ENCODE measurements at regions of chr10 and their contacts with region 1.

Region 1: DNA sequence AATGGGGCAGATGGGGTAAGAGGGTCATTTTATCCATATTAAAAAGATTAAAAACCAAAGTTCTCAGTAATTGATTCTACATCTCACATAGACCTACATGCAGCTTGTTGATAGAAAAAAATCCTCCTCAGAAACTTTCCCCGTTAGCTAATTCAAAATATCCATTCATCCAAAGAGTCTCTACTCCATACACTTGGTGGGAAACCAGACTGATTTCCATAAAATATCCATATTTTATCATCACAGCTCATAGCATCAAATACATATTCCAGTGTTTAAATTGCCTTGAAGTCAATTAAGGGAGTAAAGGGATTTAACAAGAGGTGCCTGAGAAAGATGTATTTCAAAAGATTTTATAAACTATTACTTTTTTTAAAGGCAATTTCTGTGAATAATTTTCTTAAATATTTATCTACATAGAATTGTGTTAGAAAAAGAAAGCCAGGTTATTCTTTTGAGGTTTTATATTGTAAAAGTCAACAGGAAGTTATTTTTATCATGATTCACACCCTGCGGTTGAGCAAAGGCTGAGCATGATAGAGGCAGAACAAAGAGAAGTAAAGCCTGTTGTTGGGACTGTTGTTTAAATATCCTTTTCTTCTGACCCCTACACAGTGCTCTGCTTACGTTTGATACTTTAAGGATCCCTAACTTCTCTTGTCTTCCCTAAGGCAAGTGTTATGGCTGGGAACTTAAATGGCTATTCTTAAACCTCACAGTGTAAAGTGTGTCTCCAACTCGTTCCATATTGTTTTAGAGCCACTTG is 266.7 kb downstream of the PRKG1 start:
- DNase-seq: no peak
- ATAC-seq: no peak
- H3K4me3 ChIP-seq: no peak overlapping the region
- H3K27ac ChIP-seq: peak overlapping the region in 1 of 10 donors; percentile 13
- H3K4me1 ChIP-seq: peaks cover 0 to 26% (median 0%) of the 10 kb centered on the region in 9 donors
- H3K27me3 ChIP-seq: no peaks in the 10 kb centered on the region
- CTCF ChIP-seq: no peak

Region 2: DNA sequence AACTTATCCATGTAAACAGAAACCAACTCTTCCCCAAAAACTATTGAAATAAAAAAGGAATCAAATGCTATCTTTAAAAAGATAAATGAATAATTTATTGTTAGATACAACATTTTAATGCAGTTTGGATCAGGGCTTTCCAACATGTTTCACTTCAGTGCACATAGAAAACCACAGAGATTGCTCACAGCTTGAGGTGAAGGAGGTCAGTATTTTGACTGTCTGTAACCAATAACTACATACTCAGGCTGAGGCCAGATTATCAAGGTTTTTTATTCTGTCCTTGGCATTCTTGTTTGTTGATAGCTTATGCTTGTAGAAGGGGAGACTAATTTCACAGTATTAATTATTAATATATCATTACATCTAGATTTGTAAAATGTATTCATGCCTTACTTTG is 71.2 kb before region 1 on chr10:
- intact Hi-C with region 1: loop called in 1 of 10 experiments (anchors 5 kb)
- DNase-seq: no peak
- ATAC-seq: no peak
- H3K4me3 ChIP-seq: no peak overlapping the region
- H3K27ac ChIP-seq: no peak overlapping the region
- H3K4me1 ChIP-seq: peaks cover 0 to 22% (median 4%) of the 10 kb centered on the region in 9 donors
- H3K27me3 ChIP-seq: no peaks in the 10 kb centered on the region
- CTCF ChIP-seq: no peak

Region 3: GRCh38 chr10:51397695-51398094 is 56.7 kb after region 1 on chr10:
- intact Hi-C with region 1: no loop called
- DNase-seq: peak; percentile 28 to 67
- ATAC-seq: peak; percentile 77 to 95 (median 84)
- H3K4me3 ChIP-seq: no peak overlapping the region
- H3K27ac ChIP-seq: peak overlapping the region in 2 of 10 donors; percentile 10 to 23
- H3K4me1 ChIP-seq: peaks cover 0 to 34% (median 15%) of the 10 kb centered on the region in 9 donors
- H3K27me3 ChIP-seq: no peaks in the 10 kb centered on the region
- CTCF ChIP-seq: peak in 1 of 9 donors; percentile 13

Region 4: GRCh38 chr10:51699475-51700227 is 358.6 kb after region 1 on chr10 and contains the start of gene CSTF2T:
- intact Hi-C with region 1: no loop called
- DNase-seq: peak; percentile 79 to 94
- ATAC-seq: peak; percentile 96 to 99 (median 97)
- H3K4me3 ChIP-seq: peak within 1 kb of the TSS; percentile 62 to 84 (median 72)
- H3K27ac ChIP-seq: peak within 1 kb of the TSS; percentile 88 to 99 (median 94)
- H3K4me1 ChIP-seq: peaks cover 2 to 53% (median 43%) of the 10 kb centered on the region in 9 donors
- H3K27me3 ChIP-seq: no peaks in the 10 kb centered on the region
- CTCF ChIP-seq: no peak
- total RNA-seq, gene CSTF2T: 20.6 to 31.6 (median 23.1) TPM

Region 5: GRCh38 chr10:51711519-51711891 is 370.5 kb after region 1 on chr10:
- intact Hi-C with region 1: no loop called
- DNase-seq: no peak
- ATAC-seq: no peak
- H3K4me3 ChIP-seq: no peak overlapping the region
- H3K27ac ChIP-seq: no peak overlapping the region
- H3K4me1 ChIP-seq: peaks cover 0 to 38% (median 17%) of the 10 kb centered on the region in 9 donors
- H3K27me3 ChIP-seq: no peaks in the 10 kb centered on the region
- CTCF ChIP-seq: no peak